ENCODE measurements at regions of chr6 and their contacts with region 1.

Region 1: GRCh38 chr6:129936329-129937165 is 75.4 kb upstream of the TMEM244 start:
- DNase-seq: peak; percentile 11
- H3K4me3 Mint-ChIP-seq: no peak overlapping the region
- H3K27ac Mint-ChIP-seq: no peak overlapping the region
- H3K4me1 Mint-ChIP-seq: no peaks in the 10 kb centered on the region
- H3K27me3 Mint-ChIP-seq: peaks cover 19% of the 10 kb centered on the region

Region 2: DNA sequence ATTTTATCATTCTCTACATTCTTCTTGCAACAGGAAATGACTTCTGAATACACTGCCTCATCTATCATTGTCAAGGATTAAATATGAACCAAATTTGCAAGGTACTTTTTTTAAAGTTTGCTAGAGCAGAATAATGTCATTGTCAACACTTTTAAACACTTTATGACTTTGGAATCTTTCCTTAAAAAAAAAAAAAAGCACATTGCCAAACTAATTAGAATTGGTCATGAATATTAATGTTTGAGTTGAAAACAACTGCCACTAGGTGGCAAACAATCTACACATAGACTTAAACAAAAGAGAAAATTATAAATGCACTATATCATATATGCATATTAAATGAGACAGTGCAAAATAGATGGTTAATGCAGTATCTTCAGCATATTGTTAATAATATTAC is 42.9 kb before region 1 on chr6:
- intact Hi-C with region 1: loop called (anchors 1 kb)
- DNase-seq: no peak
- H3K4me3 Mint-ChIP-seq: no peak overlapping the region
- H3K27ac Mint-ChIP-seq: no peak overlapping the region
- H3K4me1 Mint-ChIP-seq: peaks cover 6% of the 10 kb centered on the region
- H3K27me3 Mint-ChIP-seq: peaks cover 6% of the 10 kb centered on the region

Region 3: GRCh38 chr6:130047088-130047995 is 110.8 kb after region 1 on chr6:
- intact Hi-C with region 1: no loop called
- DNase-seq: no peak
- H3K4me3 Mint-ChIP-seq: no peak overlapping the region
- H3K27ac Mint-ChIP-seq: no peak overlapping the region
- H3K4me1 Mint-ChIP-seq: peaks cover 7% of the 10 kb centered on the region
- H3K27me3 Mint-ChIP-seq: no peaks in the 10 kb centered on the region